Testis (tissue), 5 donors: ENCODE measurements at regions of chr1 and their contacts with region 1.

Region 1: DNA sequence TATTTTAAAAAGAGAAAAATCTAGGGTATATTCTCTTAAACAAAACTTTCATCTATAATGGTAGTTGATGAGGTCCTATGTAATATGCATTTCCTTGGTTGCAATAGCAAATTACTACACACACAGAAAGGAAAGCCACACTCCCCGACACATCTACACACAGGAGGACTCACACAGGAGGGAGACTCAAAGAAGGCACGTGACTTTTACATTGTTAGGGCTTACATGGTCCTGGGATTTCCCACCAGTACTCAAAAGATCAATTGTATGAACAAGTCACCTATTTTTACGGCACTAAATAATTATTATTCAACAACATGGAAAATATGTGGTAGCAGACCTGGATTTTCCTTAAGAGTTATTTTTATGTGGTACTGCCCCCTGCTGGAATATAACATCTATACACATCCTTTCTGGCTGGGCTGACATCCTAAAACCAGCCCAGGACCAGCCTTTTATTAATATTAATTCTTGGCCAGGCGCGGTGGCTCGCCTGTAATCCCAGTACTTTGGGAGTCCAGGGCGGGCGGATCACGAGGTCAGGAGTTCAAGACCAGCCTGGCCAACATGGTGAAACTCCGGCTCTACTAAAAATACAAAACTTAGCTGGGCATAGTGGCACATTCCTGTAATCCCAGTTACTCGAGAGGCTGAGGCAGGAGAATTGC is 33.9 kb upstream of the LGALS8 start:
- DNase-seq: peak; percentile 49
- H3K4me3 ChIP-seq: no peak overlapping the region
- H3K27ac ChIP-seq: no peak overlapping the region
- H3K4me1 ChIP-seq: peaks cover 13% of the 10 kb centered on the region
- H3K27me3 ChIP-seq: no peaks in the 10 kb centered on the region
- CTCF ChIP-seq: peak; percentile 59 to 82 (median 75)
- POLR2A ChIP-seq: no peak

Region 2: DNA sequence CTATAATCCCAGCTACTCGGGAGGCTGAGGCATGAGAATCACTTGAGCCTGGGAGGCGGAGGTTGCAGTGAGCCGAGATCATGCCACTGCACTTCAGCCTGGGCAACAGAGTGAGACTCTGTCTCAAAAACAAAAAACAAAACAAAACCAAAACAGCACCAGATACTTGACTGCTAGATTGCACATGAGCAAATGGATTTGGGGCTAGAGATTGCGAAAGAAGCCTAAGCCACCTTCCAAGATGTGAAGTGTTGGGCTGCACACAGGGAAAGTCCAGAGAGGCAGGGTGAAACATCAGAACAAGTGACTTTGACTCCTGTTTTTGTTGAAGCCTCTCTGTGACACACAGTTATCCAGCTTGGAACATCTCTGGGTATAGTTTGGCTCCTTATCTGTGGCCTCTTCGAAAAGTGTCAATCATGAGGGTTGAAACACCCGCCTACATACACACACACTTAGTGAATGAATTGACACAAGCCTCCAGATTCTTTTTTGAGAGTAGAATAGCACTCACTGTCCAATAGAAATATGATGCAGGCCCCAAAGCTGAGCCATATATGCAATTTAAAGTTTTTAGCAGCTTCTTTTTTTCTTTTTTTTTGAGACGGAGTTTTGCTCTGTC is 381.7 kb before region 1 on chr1:
- intact Hi-C with region 1: loop called (anchors 5 kb)
- DNase-seq: no peak
- H3K4me3 ChIP-seq: no peak overlapping the region
- H3K27ac ChIP-seq: no peak overlapping the region
- H3K4me1 ChIP-seq: no peaks in the 10 kb centered on the region
- H3K27me3 ChIP-seq: no peaks in the 10 kb centered on the region
- CTCF ChIP-seq: no peak
- POLR2A ChIP-seq: no peak